Common myeloid progenitor, CD34-positive (primary cell): ENCODE measurements at regions of chr18 and their contacts with region 1.

Region 1: DNA sequence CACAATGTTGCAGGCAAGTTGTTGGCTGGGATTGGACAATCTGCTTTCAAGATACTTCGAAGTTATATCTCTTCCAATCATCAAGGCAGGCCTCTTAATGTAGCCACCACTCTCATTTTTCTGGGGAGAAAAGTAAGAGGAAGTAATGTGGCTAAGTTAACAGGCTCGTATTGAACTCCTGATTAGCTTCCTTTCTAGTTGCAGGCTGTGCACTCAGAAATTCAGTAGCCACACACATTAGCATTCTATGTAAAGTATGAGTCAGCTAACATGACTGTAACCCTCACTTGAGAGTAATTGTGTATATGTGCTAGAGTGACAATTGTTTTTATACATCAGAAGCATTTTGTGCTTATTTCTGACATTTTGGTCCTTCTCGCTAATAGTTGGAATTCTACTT is 3.3 kb downstream of the TWSG1 start:
- DNase-seq: peak; percentile 49 to 94 (median 89)
- H3K4me3 ChIP-seq: peak overlapping the region in 1 of 7 experiments; percentile 16
- H3K27ac ChIP-seq: peak overlapping the region in 1 of 2 experiments; percentile 30
- H3K4me1 ChIP-seq: peaks cover 11 to 43% (median 27%) of the 10 kb centered on the region in 4 experiments
- H3K27me3 ChIP-seq: no peaks in the 10 kb centered on the region

Region 2: DNA sequence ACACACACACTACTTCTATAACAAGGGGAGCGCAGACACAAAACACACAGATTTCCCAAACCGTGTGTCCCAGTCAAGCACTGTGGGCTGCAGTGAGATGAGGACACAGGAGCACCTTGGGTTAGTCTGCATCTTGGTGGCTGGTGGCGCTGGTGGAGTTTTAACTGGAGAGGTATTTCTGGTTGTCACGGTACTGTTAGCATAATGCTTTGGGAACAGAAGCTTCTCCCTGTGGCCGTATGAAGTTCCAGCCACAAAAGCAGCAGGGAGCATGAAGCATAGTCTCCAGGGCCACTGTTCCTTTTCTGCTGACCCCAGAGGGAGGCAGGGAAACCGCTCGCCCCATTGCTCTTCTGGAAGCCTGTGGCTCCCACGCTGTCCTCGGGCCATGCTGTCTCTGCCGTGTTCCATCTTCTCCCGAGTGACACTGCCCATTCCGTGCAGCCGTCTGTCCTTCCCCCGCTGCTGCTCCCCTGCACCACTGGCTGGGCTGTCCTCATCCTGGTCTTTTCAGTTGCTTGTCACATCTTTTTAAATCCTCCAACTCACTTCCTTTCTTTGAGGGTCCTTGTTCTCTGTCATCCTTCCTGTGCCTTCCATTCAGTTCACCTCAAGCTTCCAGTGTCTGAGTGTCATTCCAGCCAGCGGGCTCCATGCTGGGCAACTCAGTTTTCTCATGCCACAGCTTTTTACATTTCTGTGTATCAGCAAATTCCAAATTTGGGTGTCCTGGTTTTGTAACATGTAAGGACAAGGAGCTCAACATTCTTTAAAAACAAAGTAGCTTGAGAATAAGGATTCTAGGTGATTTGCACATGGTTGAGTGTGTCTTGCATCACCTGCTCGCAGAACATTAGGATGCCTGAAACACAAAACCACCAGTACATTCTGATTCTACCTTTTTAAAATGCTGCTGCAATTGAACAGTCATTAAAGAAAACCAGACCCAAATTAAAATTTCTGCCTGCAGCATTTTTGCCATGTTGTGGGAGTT is 507.5 kb before region 1 on chr18:
- CTCF ChIA-PET with region 1: no interaction called
- POLR2A ChIA-PET with region 1: no interaction called
- DNase-seq: no peak
- H3K4me3 ChIP-seq: no peak overlapping the region
- H3K27ac ChIP-seq: no peak overlapping the region
- H3K4me1 ChIP-seq: peaks cover 0 to 4% (median 2%) of the 10 kb centered on the region in 4 experiments
- H3K27me3 ChIP-seq: peaks cover 0 to 3% (median 0%) of the 10 kb centered on the region in 5 experiments

Region 3: DNA sequence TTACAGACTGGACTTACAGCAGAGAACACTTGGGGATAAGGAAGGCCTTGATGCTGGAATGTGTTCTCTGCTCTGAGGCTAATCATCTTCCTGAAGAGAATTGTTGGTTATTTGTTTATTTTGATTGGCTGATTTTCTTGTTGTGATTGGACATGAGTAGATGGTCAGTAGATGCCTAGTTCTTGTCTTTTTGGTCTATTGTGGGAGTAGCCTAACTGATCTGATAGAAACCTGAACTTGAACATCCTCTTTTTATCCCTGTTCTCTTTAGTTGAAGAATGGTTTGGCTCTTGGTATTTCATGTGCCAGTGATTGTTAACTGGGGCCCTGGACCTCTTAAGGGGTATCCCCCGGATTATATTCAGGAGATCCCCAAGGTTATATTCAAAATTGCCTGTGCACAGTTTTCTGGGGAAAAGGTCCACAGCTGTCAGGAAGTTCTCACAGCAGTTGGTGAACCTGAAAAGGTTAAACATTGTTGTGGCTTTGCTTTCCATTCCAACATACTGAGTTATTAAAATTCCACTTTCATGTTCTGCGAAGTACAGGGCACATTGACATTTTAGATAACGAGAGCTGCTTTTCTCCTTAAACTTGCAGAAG is 10.3 kb after region 1 on chr18:
- CTCF ChIA-PET with region 1: interaction called, 11 read pairs
- POLR2A ChIA-PET with region 1: no interaction called
- DNase-seq: no peak
- H3K4me3 ChIP-seq: no peak overlapping the region
- H3K27ac ChIP-seq: no peak overlapping the region
- H3K4me1 ChIP-seq: peaks cover 0 to 8% (median 6%) of the 10 kb centered on the region in 4 experiments
- H3K27me3 ChIP-seq: no peaks in the 10 kb centered on the region

Region 4: GRCh38 chr18:9549405-9549804 is 211.5 kb after region 1 on chr18:
- CTCF ChIA-PET with region 1: no interaction called
- POLR2A ChIA-PET with region 1: no interaction called
- DNase-seq: no peak
- H3K4me3 ChIP-seq: no peak overlapping the region
- H3K27ac ChIP-seq: no peak overlapping the region
- H3K4me1 ChIP-seq: no peaks in the 10 kb centered on the region
- H3K27me3 ChIP-seq: no peaks in the 10 kb centered on the region

Region 5: DNA sequence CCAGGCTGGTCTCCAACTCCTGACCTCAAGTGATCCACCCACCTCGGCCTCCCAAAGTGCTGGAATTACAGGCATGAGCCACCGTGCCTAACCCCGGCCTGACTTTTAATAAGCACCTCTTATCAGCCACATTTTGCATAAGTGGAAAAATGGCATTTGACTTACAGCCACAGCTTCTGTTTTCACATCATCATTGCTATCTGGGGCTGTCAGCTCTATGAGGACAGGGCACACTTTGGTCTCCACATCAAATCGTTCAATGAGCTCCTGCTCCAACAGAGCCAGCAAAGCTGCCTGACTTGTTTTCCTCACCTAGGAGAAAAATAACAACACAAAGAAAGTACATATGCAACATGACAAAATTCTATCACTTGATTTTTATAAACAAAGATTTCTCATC is 250.1 kb after region 1 on chr18:
- CTCF ChIA-PET with region 1: no interaction called
- POLR2A ChIA-PET with region 1: no interaction called
- DNase-seq: no peak
- H3K4me3 ChIP-seq: no peak overlapping the region
- H3K27ac ChIP-seq: no peak overlapping the region
- H3K4me1 ChIP-seq: no peaks in the 10 kb centered on the region
- H3K27me3 ChIP-seq: no peaks in the 10 kb centered on the region

Region 6: DNA sequence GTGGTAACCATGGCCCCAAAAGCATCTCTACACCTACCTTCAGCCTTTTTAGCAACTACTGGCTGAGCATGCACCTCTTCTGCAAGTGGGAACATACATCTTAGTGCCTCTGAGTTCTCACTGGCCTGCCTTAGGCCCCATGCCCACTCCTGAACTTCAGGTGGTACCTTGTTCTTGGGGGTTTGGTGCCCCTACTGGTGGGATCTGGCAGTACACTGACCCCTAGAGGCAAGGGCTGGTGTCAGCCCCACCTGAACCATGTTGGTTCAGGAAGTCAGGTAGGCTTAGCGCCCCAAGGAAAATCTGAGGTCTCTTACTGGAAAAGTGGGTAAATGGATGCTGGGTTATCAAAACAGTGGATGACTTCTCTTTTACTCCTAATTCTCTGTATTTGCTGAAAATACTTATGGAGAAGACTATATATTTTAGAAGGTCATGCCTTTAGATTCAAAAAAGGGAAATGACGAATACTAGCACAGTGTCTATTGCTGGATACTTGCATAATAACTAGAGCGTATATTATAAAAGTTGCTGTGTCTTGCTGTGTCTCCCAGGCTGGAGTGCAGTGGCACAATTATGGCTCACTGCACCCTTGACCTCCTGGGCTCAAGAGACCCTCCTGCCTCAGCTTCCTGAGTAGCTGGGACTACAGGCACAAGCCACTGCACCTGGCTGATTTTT is 454.8 kb after region 1 on chr18:
- CTCF ChIA-PET with region 1: no interaction called
- POLR2A ChIA-PET with region 1: no interaction called
- DNase-seq: peak; percentile 28 to 47 (median 38)
- H3K4me3 ChIP-seq: no peak overlapping the region
- H3K27ac ChIP-seq: no peak overlapping the region
- H3K4me1 ChIP-seq: no peaks in the 10 kb centered on the region
- H3K27me3 ChIP-seq: no peaks in the 10 kb centered on the region